K562 (cell line): ENCODE measurements at regions of chr9 and their contacts with region 1.

Region 1: DNA sequence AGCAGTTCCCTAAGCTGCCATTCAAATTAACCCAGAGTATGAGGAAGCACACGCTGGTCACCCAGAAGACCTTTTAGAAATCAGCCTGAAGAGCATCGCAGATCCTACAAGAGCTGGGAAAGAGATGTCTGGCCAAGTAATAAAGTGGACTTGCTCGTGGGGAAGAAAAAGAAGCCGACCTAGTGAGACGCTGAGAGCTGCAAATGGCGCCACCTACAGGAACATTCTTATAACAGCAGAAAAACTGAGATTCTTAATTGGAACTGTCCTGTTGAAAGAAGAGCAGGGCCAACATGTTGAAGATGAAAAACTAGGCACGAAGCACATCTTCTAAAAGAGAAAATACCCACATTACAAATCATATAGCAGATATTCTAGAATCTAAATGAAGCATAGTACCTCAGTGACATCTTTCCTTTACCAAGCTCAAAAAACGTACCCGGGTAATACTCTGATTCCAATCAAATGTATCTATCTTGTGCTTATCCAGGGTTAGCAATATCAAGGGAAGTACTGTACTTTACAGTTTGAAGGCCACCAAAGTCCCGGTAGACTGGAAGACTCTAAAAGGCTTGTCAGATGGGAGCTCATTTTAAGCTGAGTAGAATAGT is 3.9 kb upstream of the GNAQ start:
- DNase-seq: peak; percentile 45 to 80 (median 46)
- ATAC-seq: peak; percentile 17
- H3K4me3 ChIP-seq: no peak overlapping the region
- H3K27ac ChIP-seq: peak overlapping the region; percentile 15; the same call in 1 of the 3 replicates
- H3K4me1 ChIP-seq: peaks cover 7 to 17% of the 10 kb centered on the region in 2 experiments
- H3K27me3 ChIP-seq: no peaks in the 10 kb centered on the region
- CTCF ChIP-seq: peak; percentile 65 to 79 (median 70)
- EP300 ChIP-seq: no peak
- POLR2A ChIP-seq: no peak
- RAD21 ChIP-seq: peak; percentile 73 to 83

Region 2: DNA sequence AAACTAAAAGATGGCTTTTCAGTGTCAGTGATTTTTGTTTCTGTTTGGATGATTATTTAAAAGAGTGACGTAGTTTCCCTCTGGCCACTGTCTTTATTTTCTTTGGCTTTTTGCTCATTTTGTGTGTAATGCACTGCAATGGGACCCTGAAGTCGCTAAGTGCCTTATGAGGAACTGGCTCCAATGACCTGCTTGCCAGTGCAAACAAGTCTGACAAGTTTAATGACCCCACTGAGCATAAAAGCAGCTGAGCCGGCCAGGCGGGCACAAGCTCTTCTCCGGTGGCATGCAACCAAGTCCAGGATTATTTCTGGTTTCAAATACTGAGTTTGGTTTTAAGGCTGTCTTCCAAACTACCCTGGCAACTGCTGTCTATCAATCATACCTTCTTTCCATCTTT is 371.7 kb before region 1 on chr9:
- CTCF ChIA-PET with region 1: no interaction called
- POLR2A ChIA-PET with region 1: no interaction called
- in situ Hi-C with region 1: no loop called
- intact Hi-C with region 1: loop called (anchors 10 kb)
- DNase-seq: no peak
- ATAC-seq: no peak
- H3K4me3 ChIP-seq: no peak overlapping the region
- H3K27ac ChIP-seq: no peak overlapping the region
- H3K4me1 ChIP-seq: no peaks in the 10 kb centered on the region
- H3K27me3 ChIP-seq: peaks cover 7 to 8% of the 10 kb centered on the region in 2 experiments; a peak in 4 of 5 replicates
- CTCF ChIP-seq: no peak
- EP300 ChIP-seq: no peak
- POLR2A ChIP-seq: no peak
- RAD21 ChIP-seq: no peak

Region 3: GRCh38 chr9:77751341-77752091 is 284.0 kb before region 1 on chr9:
- CTCF ChIA-PET with region 1: no interaction called
- POLR2A ChIA-PET with region 1: no interaction called
- in situ Hi-C with region 1: no loop called
- intact Hi-C with region 1: loop called (anchors 5 kb)
- DNase-seq: peak; percentile 8 to 40 (median 8)
- ATAC-seq: peak; percentile 84
- H3K4me3 ChIP-seq: no peak overlapping the region
- H3K27ac ChIP-seq: no peak overlapping the region
- H3K4me1 ChIP-seq: peaks cover 4 to 5% of the 10 kb centered on the region in 2 experiments; a peak in 2 of 5 replicates
- H3K27me3 ChIP-seq: no peaks in the 10 kb centered on the region
- CTCF ChIP-seq: peak; percentile 10 to 49 (median 29); a peak in 3 of 6 replicates
- EP300 ChIP-seq: no peak
- POLR2A ChIP-seq: no peak
- RAD21 ChIP-seq: peak in 1 of 2 experiments; percentile 48; a peak in 2 of 4 replicates

Region 4: DNA sequence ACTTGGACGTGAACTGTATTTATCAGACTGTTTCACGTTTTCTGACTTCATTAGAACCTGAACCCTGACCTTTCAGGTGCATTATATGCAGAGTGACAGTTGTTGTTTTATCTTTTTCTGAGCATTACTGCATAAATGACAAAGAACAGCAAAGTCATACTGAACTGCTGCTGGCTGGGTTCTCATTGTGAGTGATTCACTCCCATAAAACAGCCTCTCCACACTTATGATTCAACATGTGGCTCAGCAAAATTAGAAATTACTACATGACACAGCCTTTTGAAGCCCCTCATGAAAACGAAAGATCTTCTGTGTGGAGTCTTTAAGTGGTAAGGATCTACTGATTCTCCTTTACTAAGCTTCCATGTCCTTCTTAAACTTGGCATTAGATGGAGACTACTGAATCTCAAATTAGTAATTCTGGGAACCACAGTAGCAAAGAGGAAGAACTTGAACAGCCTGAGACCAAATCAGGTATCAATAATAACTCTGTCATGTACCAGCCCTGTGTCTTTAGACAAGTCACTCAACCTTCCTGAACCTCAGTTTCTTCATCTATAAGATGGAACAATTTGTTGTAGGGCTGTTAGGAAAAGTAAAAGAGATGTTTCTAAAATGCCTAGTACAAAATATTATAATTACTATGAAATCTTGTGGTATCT is 215.1 kb before region 1 on chr9:
- CTCF ChIA-PET with region 1: no interaction called
- POLR2A ChIA-PET with region 1: no interaction called
- in situ Hi-C with region 1: no loop called
- intact Hi-C with region 1: loop called (anchors 10 kb)
- DNase-seq: peak; percentile 15 to 75 (median 40)
- ATAC-seq: peak; percentile 91
- H3K4me3 ChIP-seq: no peak overlapping the region; the same call in 1 of the 2 replicates
- H3K27ac ChIP-seq: peak overlapping the region; percentile 84
- H3K4me1 ChIP-seq: peaks cover 3 to 21% of the 10 kb centered on the region in 2 experiments; a peak in 3 of 5 replicates
- H3K27me3 ChIP-seq: no peaks in the 10 kb centered on the region
- CTCF ChIP-seq: no peak
- EP300 ChIP-seq: peak; percentile 71; the same call in 1 of the 2 replicates
- POLR2A ChIP-seq: no peak
- RAD21 ChIP-seq: no peak

Region 5: DNA sequence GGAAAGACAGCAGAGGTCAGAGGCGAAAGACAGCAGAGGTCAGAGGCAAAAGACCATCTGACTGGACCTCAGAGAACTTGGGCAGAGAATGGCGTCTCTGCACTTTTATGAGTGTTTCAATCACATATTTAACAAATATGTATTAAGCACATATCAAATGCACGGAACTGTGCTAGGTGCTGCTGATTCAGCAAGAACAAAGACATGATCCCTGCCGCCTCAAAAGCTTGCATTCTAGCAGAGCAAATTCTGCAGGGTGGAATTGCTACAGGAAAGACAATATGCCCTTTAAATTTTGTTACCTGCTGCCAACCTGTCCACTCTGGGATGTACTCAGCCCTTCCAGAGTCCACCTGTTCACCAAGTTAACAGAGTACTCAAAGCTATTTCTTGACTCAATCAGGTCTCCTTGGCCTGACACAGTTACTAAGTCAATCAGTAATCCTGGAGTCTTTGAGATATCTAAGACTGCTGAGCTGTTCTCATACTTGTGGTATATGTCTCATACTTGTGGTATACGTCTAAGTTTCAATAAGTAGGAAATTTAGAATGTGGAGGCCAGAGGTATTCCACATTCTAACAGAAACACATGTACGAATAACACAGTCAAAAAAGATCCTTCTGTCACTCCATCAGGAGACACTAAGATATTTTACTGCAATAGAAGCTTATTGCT is 135.7 kb before region 1 on chr9:
- CTCF ChIA-PET with region 1: no interaction called
- POLR2A ChIA-PET with region 1: no interaction called
- in situ Hi-C with region 1: no loop called
- intact Hi-C with region 1: loop called (anchors 10 kb)
- DNase-seq: no peak
- ATAC-seq: no peak
- H3K4me3 ChIP-seq: no peak overlapping the region
- H3K27ac ChIP-seq: no peak overlapping the region
- H3K4me1 ChIP-seq: peaks cover 9 to 31% of the 10 kb centered on the region in 2 experiments
- H3K27me3 ChIP-seq: no peaks in the 10 kb centered on the region
- CTCF ChIP-seq: no peak
- EP300 ChIP-seq: no peak
- POLR2A ChIP-seq: no peak
- RAD21 ChIP-seq: no peak

Region 6: GRCh38 chr9:77977210-77977611 is 58.3 kb before region 1 on chr9:
- CTCF ChIA-PET with region 1: interaction called, 5 read pairs
- POLR2A ChIA-PET with region 1: interaction called, 4 read pairs
- in situ Hi-C with region 1: loop called (anchors 10 kb)
- intact Hi-C with region 1: loop called (anchors 1 kb)
- DNase-seq: peak; percentile 28 to 73 (median 41)
- ATAC-seq: peak; percentile 80
- H3K4me3 ChIP-seq: no peak overlapping the region
- H3K27ac ChIP-seq: peak overlapping the region; percentile 62; the same call in 1 of the 3 replicates
- H3K4me1 ChIP-seq: peaks cover 10 to 36% of the 10 kb centered on the region in 2 experiments; a peak in 4 of 5 replicates
- H3K27me3 ChIP-seq: no peaks in the 10 kb centered on the region
- CTCF ChIP-seq: peak; percentile 57 to 75 (median 68)
- EP300 ChIP-seq: no peak
- POLR2A ChIP-seq: no peak
- RAD21 ChIP-seq: peak; percentile 72 to 85